ENCODE measurements at regions of chr3 and their contacts with region 1.

Region 1: GRCh38 chr3:8324740-8325139 is 176.9 kb upstream of the LMCD1 start:
- DNase-seq: peak; percentile 62
- H3K4me3 Mint-ChIP-seq: no peak overlapping the region
- H3K27ac Mint-ChIP-seq: no peak overlapping the region
- H3K4me1 Mint-ChIP-seq: peaks cover 9% of the 10 kb centered on the region
- H3K27me3 Mint-ChIP-seq: no peaks in the 10 kb centered on the region

Region 2: GRCh38 chr3:8301728-8302462 is 22.8 kb before region 1 on chr3:
- CTCF ChIA-PET with region 1: interaction called, 10 read pairs
- POLR2A ChIA-PET with region 1: no interaction called
- intact Hi-C with region 1: no loop called
- DNase-seq: no peak
- H3K4me3 Mint-ChIP-seq: no peak overlapping the region
- H3K27ac Mint-ChIP-seq: no peak overlapping the region
- H3K4me1 Mint-ChIP-seq: no peaks in the 10 kb centered on the region
- H3K27me3 Mint-ChIP-seq: no peaks in the 10 kb centered on the region

Region 3: DNA sequence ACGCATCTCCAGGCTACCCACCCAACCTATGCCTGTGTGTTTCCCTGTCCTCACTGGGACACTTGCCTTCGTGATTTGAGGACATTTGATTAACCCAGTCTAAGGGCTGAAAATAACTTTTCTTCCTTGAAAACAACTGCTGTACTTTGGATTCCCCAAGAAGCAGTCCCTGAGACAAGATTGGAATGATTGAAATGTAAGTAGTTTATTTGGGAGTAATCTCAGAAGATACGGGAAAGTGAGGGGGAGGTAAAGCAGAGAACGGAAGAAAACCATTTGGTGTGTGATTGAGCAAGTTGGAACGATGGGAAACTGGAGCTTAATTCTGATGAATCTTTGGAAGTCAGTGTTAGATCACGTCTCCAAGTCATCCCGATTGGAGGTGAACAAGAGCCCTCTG is 33.1 kb after region 1 on chr3:
- CTCF ChIA-PET with region 1: interaction called, 3 read pairs
- POLR2A ChIA-PET with region 1: no interaction called
- intact Hi-C with region 1: loop called (anchors 1 kb)
- DNase-seq: no peak
- H3K4me3 Mint-ChIP-seq: no peak overlapping the region
- H3K27ac Mint-ChIP-seq: peak overlapping the region; percentile 87
- H3K4me1 Mint-ChIP-seq: peaks cover 33% of the 10 kb centered on the region
- H3K27me3 Mint-ChIP-seq: no peaks in the 10 kb centered on the region

Region 4: DNA sequence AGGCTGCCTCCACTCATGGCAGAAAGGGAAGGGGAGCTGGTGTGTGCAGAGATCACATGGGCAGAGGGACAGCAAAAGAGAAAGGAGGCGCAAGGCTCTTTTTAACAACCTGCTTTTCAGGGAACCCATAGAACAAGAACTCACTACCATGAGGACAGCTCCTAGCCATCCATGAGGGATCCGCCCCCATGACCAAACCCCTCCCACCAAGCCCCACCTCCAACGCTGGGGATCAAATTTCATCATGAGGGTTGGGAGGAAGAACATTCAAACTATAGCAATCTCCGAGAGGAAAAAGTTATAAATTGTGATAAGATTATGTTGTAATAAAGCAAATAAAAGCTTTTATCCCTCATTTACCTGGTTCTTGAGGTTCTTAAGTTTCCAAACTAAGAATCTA is 92.2 kb after region 1 on chr3:
- CTCF ChIA-PET with region 1: interaction called, 148 read pairs
- POLR2A ChIA-PET with region 1: interaction called, 4 read pairs
- intact Hi-C with region 1: loop called (anchors 1 kb)
- DNase-seq: no peak
- H3K4me3 Mint-ChIP-seq: no peak overlapping the region
- H3K27ac Mint-ChIP-seq: no peak overlapping the region
- H3K4me1 Mint-ChIP-seq: peaks cover 9% of the 10 kb centered on the region
- H3K27me3 Mint-ChIP-seq: no peaks in the 10 kb centered on the region